ENCODE measurements at regions of chr14 and their contacts with region 1.

Region 1: DNA sequence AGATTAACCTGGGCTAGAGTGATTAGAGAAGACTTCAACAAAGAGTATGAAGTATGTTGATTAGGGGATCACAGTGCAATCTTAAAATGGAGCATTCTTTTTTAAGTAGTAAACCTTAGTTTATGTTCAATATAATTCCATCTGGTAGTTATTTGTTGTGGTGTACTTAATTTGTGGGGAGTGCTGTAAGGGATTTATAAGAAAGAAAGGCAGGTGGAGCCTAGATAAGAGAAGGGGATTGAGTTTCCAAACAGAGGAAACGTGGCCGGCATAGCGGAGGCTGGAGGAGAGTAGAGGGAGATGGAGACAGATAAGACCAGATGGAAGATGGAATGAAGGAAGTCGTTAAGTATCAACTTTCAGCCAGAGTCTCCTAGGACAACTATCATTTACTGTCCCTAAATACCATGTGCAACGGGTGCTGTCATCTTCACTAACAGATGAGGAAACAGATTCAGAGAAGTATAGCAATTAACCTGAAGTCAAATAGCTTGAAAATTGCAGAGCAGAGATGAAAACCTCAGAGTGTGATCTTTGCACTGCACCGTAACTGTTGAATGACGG is 38.1 kb downstream of the GOLGA5 start:
- DNase-seq: no peak
- ATAC-seq: no peak
- H3K4me3 ChIP-seq: no peak overlapping the region
- H3K27ac ChIP-seq: no peak overlapping the region
- H3K4me1 ChIP-seq: no peaks in the 10 kb centered on the region
- H3K27me3 ChIP-seq: no peaks in the 10 kb centered on the region
- CTCF ChIP-seq: no peak

Region 2: DNA sequence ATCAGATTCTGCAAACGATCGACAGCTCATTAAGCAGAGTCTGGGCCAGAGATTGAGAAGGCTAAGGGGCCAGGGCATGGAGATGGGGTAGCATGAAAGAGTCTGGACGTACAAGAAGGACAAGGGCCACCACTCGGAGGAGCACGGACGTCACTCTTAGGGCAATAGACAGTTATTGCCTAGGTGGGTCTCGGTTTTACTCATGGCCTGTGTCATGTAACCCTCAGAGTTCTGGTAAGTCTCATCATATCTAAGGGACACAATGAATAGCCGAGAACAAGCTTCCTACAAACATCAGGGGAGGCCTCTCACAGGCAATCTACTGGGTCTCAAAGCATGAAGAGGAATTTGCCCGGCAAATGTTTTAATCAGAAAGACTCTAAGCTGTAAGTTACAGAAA is 313.9 kb after region 1 on chr14:
- intact Hi-C with region 1: loop called in 1 of 10 experiments (anchors 10 kb)
- DNase-seq: no peak
- ATAC-seq: no peak
- H3K4me3 ChIP-seq: no peak overlapping the region
- H3K27ac ChIP-seq: no peak overlapping the region
- H3K4me1 ChIP-seq: peaks cover 0 to 12% (median 0%) of the 10 kb centered on the region in 9 donors
- H3K27me3 ChIP-seq: no peaks in the 10 kb centered on the region
- CTCF ChIP-seq: no peak